Activated T-helper 1 cell treated with anti-CD3 and anti-CD28 coated beads, Interleukin-12 subunit alpha, Interleukin-12 subunit beta, Interleukin-2, Interleukin-4 antibody, amounts not matched to agents 30 ng/mL and 10 ng/mL and 1 ng/mL, durations not matched to agents 14 hours and 24 hours and 36 hours (primary cell): ENCODE measurements at regions of chr10 and their contacts with region 1.

Region 1: GRCh38 chr10:12703813-12704212 is 297.7 kb downstream of the CCDC3 start:
- DNase-seq: no peak
- H3K4me3 Mint-ChIP-seq: no peak overlapping the region
- H3K27ac Mint-ChIP-seq: peak overlapping the region; percentile 36
- H3K4me1 Mint-ChIP-seq: peaks cover 72% of the 10 kb centered on the region
- H3K27me3 Mint-ChIP-seq: no peaks in the 10 kb centered on the region

Region 2: GRCh38 chr10:12412666-12413368 is 291.0 kb before region 1 on chr10:
- intact Hi-C with region 1: loop called (anchors 5 kb)
- DNase-seq: peak; percentile 44
- H3K4me3 Mint-ChIP-seq: no peak overlapping the region
- H3K27ac Mint-ChIP-seq: peak overlapping the region; percentile 19
- H3K4me1 Mint-ChIP-seq: peaks cover 20% of the 10 kb centered on the region
- H3K27me3 Mint-ChIP-seq: peaks cover 4% of the 10 kb centered on the region

Region 3: DNA sequence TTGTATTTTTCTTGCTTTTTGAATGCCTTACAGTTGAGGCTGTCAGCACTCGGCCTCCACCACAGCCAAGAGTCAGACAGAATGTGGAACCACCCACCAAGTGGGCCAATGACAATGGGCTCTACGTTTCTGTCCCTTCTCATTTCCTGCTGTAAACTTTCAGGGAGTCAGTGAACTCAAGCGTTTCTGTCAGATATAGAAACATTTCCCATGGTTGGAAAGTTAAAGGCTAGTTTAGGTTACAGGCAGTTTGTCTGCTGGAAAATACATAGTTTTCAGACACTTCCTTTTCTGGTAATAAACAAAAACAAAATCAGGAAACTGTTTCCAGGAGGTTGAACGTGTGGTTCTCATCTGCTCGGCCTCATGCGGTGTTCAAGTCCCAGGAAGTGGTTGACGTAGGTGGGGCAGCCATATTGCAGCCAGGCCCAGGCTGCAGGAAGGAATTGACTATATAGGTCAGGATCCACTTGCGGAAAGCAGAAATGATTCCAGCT is 109.3 kb before region 1 on chr10:
- intact Hi-C with region 1: no loop called
- DNase-seq: peak; percentile 64
- H3K4me3 Mint-ChIP-seq: peak overlapping the region; percentile 45
- H3K27ac Mint-ChIP-seq: peak overlapping the region; percentile 90
- H3K4me1 Mint-ChIP-seq: peaks cover 95% of the 10 kb centered on the region
- H3K27me3 Mint-ChIP-seq: no peaks in the 10 kb centered on the region

Region 4: GRCh38 chr10:12644380-12645144 is 59.3 kb before region 1 on chr10:
- intact Hi-C with region 1: loop called (anchors 2 kb)
- DNase-seq: no peak
- H3K4me3 Mint-ChIP-seq: peak overlapping the region; percentile 38
- H3K27ac Mint-ChIP-seq: peak overlapping the region; percentile 85
- H3K4me1 Mint-ChIP-seq: peaks cover 27% of the 10 kb centered on the region
- H3K27me3 Mint-ChIP-seq: peaks cover 2% of the 10 kb centered on the region